Activated CD4-positive, alpha-beta T cell treated with anti-CD3 and anti-CD28 coated beads for 36 hours (primary cell): ENCODE measurements at regions of chr7 and their contacts with region 1.

Region 1: DNA sequence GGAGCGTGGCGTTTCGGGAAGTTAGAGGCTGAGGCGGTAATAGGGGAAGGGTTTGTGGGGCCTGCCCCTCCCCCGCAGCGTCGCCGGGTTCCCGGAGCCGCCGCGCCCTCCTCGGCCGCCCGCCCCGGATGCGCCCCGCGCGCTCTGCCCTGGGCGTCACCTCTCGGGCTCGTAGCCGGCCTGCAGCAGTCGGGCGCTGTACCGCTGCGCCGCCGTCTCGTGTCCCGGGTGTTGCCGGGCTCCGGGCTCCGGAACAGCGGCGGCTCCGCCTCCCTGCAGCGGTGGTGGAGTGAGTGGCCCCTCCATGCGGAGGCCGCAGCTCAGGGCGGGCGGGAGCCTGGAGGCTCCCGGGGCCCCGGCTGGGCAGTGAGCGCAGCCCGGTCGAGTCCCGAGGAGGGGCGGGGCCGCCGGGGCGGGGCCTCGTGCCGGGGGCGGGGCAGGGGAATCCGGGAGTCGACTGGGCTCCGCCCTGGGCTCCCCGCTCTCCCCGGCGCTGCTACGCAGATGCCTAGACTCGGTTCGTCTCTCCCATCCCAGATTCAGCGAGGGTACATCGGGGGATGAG is at the start of gene IMPDH1:
- DNase-seq: peak; percentile 92
- ATAC-seq: peak; percentile 85
- H3K4me3 Mint-ChIP-seq: peak within 1 kb of the TSS; percentile 78
- H3K27ac Mint-ChIP-seq: peak within 1 kb of the TSS; percentile 78
- H3K4me1 Mint-ChIP-seq: peaks cover 27% of the 10 kb centered on the region
- H3K27me3 Mint-ChIP-seq: no peaks in the 10 kb centered on the region
- total RNA-seq, gene IMPDH1: 59.0 to 60.7 TPM

Region 2: GRCh38 chr7:128398016-128398840 is 11.4 kb before region 1 on chr7:
- CTCF ChIA-PET with region 1: interaction called, 19 read pairs
- POLR2A ChIA-PET with region 1: no interaction called
- intact Hi-C with region 1: no loop called
- DNase-seq: peak; percentile 65
- ATAC-seq: peak; percentile 59
- H3K4me3 Mint-ChIP-seq: no peak overlapping the region
- H3K27ac Mint-ChIP-seq: no peak overlapping the region
- H3K4me1 Mint-ChIP-seq: peaks cover 5% of the 10 kb centered on the region
- H3K27me3 Mint-ChIP-seq: no peaks in the 10 kb centered on the region

Region 3: DNA sequence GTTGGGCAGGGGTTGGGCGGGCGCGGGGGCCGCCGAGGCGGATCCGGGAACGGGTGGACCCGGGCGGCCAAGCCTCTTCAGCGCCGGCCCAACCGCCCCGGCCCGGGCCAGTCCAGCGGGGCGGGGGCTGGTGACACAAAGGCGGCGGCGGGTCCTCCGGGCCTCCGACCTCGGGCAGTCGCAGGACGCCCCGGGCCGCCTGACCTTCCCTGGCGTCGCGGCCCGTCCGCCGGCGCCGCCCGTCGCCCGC is 121.1 kb after region 1 on chr7:
- CTCF ChIA-PET with region 1: no interaction called
- POLR2A ChIA-PET with region 1: no interaction called
- intact Hi-C with region 1: loop called in 1 of 2 experiments (anchors 1 kb)
- DNase-seq: no peak
- ATAC-seq: no peak
- H3K4me3 Mint-ChIP-seq: peak overlapping the region; percentile 95
- H3K27ac Mint-ChIP-seq: no peak overlapping the region
- H3K4me1 Mint-ChIP-seq: peaks cover 27% of the 10 kb centered on the region
- H3K27me3 Mint-ChIP-seq: no peaks in the 10 kb centered on the region

Region 4: DNA sequence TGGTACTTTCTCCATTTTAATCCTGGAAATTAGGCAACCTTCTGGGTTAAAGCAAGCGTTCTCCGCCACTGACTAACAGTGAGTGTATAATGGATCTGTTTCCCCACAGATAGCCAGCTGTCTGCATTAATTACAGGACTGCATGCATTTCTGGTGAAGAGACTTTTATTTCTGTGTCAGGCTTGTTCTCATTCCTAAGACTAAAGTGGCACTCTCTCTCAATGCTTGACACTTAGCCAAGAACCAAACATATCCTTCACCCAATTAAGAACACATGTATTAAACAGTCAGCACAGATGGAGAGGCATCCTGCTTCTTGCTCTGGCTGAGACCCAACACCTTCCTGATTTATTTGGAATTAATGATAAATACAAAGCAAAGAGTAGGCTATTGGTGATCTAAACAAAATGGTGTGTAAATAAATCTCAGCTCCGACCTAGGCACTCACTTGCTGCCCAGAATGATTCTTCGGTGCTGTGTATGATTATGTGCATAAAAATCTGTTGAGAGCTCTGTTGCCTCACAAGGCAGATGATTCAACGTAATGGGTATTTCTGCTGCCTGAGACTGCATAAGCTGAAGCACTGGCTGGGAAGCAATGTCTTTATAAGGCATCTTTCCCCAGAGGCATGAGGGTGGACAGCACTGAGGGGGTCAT is 346.3 kb after region 1 on chr7:
- CTCF ChIA-PET with region 1: no interaction called
- POLR2A ChIA-PET with region 1: no interaction called
- intact Hi-C with region 1: no loop called
- DNase-seq: no peak
- ATAC-seq: no peak
- H3K4me3 Mint-ChIP-seq: no peak overlapping the region
- H3K27ac Mint-ChIP-seq: no peak overlapping the region
- H3K4me1 Mint-ChIP-seq: peaks cover 5% of the 10 kb centered on the region
- H3K27me3 Mint-ChIP-seq: no peaks in the 10 kb centered on the region